Tibial artery (tissue), 4 donors: ENCODE measurements at regions of chr1 and their contacts with region 1.

Region 1: DNA sequence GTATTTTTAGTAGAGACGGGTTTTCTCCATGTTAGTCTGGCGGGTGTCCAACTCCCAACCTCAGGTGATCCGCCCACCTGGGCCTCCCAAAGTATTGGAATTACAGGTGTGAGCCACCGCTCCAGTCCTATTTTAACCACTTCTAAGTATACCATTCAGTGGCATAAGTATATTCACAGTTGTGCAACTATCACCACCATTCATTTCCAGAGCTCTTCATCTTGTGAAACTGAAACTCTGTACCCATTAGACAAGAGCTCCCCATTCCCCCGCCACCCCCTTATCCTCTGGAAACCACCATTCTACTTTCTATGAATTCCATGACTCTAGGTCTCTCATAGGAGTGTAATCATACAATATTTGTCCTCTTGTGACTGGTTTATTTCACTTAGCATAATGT is 40.2 kb upstream of the CAMTA1 start:
- DNase-seq: no peak
- H3K4me3 ChIP-seq: no peak overlapping the region
- H3K27ac ChIP-seq: no peak overlapping the region
- H3K4me1 ChIP-seq: peaks cover 0 to 19% (median 13%) of the 10 kb centered on the region in 4 donors
- H3K27me3 ChIP-seq: no peaks in the 10 kb centered on the region
- CTCF ChIP-seq: no peak

Region 2: GRCh38 chr1:6784560-6785317 is 39.7 kb after region 1 on chr1:
- intact Hi-C with region 1: loop called (anchors 5 kb)
- DNase-seq: peak; percentile 100
- H3K4me3 ChIP-seq: peak overlapping the region; percentile 81
- H3K27ac ChIP-seq: peak overlapping the region; percentile 98
- H3K4me1 ChIP-seq: peaks cover 0 to 47% (median 22%) of the 10 kb centered on the region in 4 donors
- H3K27me3 ChIP-seq: no peaks in the 10 kb centered on the region
- CTCF ChIP-seq: peak in 1 of 2 experiments; percentile 48

Region 3: GRCh38 chr1:6801966-6802365 is 56.9 kb after region 1 on chr1:
- intact Hi-C with region 1: no loop called
- DNase-seq: no peak
- H3K4me3 ChIP-seq: no peak overlapping the region
- H3K27ac ChIP-seq: peak overlapping the region; percentile 73 to 76
- H3K4me1 ChIP-seq: peaks cover 0 to 79% (median 36%) of the 10 kb centered on the region in 4 donors
- H3K27me3 ChIP-seq: no peaks in the 10 kb centered on the region
- CTCF ChIP-seq: no peak